ENCODE measurements at regions of chr12 and their contacts with region 1.

Region 1: DNA sequence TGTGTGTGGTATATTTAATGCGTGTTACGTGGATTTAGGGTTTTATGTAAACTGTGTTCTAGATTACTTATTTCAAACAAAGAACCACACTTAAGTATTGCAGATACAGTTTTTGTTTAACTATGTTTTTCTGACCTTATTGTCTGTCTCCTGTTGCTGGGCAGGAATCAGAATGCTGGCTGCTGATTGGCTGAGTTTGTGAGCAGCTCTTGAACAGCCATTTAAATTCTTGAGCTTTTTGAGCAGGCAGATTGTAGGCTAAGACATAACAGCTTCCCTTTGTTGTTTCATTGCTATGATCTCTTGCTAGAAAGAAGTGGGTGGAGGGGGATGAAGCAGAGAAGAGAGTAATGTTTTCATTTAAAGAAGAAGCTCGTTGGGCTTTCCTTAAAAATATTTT is 52.2 kb downstream of the ATF7IP start:
- DNase-seq: no peak
- ATAC-seq: peak; percentile 76
- H3K4me3 Mint-ChIP-seq: peak overlapping the region; percentile 86
- H3K27ac Mint-ChIP-seq: peak overlapping the region; percentile 95
- H3K4me1 Mint-ChIP-seq: peaks cover 32% of the 10 kb centered on the region
- H3K27me3 Mint-ChIP-seq: no peaks in the 10 kb centered on the region

Region 2: GRCh38 chr12:14257734-14258574 is 159.8 kb before region 1 on chr12:
- POLR2A ChIA-PET with region 1: interaction called, 13 read pairs
- DNase-seq: peak; percentile 74
- ATAC-seq: peak; percentile 82
- H3K4me3 Mint-ChIP-seq: peak overlapping the region; percentile 74
- H3K27ac Mint-ChIP-seq: peak overlapping the region; percentile 97
- H3K4me1 Mint-ChIP-seq: peaks cover 37% of the 10 kb centered on the region
- H3K27me3 Mint-ChIP-seq: no peaks in the 10 kb centered on the region

Region 3: GRCh38 chr12:14384783-14385638 is 32.7 kb before region 1 on chr12:
- POLR2A ChIA-PET with region 1: interaction called, 10 read pairs
- DNase-seq: no peak
- ATAC-seq: peak; percentile 96
- H3K4me3 Mint-ChIP-seq: peak overlapping the region; percentile 85
- H3K27ac Mint-ChIP-seq: peak overlapping the region; percentile 94
- H3K4me1 Mint-ChIP-seq: peaks cover 44% of the 10 kb centered on the region
- H3K27me3 Mint-ChIP-seq: no peaks in the 10 kb centered on the region

Region 4: GRCh38 chr12:14394317-14395073 is 23.2 kb before region 1 on chr12:
- POLR2A ChIA-PET with region 1: interaction called, 11 read pairs
- DNase-seq: no peak
- ATAC-seq: peak; percentile 76
- H3K4me3 Mint-ChIP-seq: peak overlapping the region; percentile 83
- H3K27ac Mint-ChIP-seq: peak overlapping the region; percentile 89
- H3K4me1 Mint-ChIP-seq: peaks cover 61% of the 10 kb centered on the region
- H3K27me3 Mint-ChIP-seq: no peaks in the 10 kb centered on the region

Measured in activated naive CD8-positive, alpha-beta T cell treated with anti-CD3 and anti-CD28 coated beads, Interleukin-2, amount 10 ng/mL, durations not matched to agents 7 days and 5 days (primary cell).